Left ventricle myocardium superior (tissue), 1 donor: ENCODE measurements at regions of chr15 and their contacts with region 1.

Region 1: GRCh38 chr15:94119923-94120775 is 111.2 kb upstream of the MCTP2 start:
- DNase-seq: peak; percentile 28
- ATAC-seq: peak; percentile 95

Region 2: GRCh38 chr15:93030430-93031105 is 1089.6 kb before region 1 on chr15:
- intact Hi-C with region 1: loop called (anchors 5 kb)
- DNase-seq: peak; percentile 73
- ATAC-seq: peak; percentile 66

Region 3: GRCh38 chr15:93789441-93789840 is 330.7 kb before region 1 on chr15:
- intact Hi-C with region 1: no loop called
- DNase-seq: no peak
- ATAC-seq: no peak

Region 4: GRCh38 chr15:94145046-94145445 is 24.9 kb after region 1 on chr15:
- intact Hi-C with region 1: no loop called
- DNase-seq: no peak
- ATAC-seq: no peak